Psoas muscle (tissue), 8 donors: ENCODE measurements at regions of chr19 and their contacts with region 1.

Region 1: GRCh38 chr19:49200238-49200862 is 42.8 kb downstream of the TRPM4 start:
- DNase-seq: peak in 1 of 2 donors; percentile 55
- ATAC-seq: peak in 3 of 4 donors; percentile 36 to 41 (median 41)
- H3K4me3 ChIP-seq: no peak overlapping the region
- H3K27ac ChIP-seq: no peak overlapping the region
- H3K4me1 ChIP-seq: peaks cover 13% of the 10 kb centered on the region
- H3K27me3 ChIP-seq: no peaks in the 10 kb centered on the region
- CTCF ChIP-seq: no peak

Region 2: DNA sequence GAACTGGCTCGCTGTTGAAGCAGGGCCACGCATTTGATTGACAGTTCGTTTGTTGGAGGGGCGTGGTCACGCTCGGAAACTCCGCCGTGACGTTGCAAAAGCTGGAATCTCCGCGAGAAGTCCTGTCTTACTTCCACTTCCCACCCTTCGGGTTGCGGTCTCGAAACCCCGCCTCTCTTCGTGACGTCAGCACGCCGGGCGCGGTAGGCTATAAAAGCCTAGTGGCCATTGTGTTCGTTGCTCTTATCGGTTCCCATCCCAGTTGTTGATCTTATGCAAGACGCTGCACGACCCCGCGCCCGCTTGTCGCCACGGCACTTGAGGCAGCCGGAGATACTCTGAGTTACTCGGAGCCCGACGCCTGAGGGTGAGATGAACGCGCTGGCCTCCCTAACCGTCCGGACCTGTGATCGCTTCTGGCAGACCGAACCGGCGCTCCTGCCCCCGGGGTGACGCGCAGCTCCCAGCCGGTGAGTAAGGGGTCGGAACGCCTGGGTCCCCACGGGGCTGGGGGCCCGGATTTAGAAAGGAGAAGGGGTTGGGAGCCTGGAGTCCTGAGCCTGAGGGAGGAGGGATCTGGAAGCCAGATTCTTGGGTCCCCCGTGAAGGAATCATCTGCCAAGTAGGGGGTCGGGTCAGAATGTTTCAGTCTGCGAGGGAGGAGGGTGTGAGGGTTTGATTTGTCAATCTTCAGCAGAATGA is 328.0 kb before region 1 on chr19 and contains the start of gene PPP1R15A:
- intact Hi-C with region 1: no loop called
- DNase-seq: peak; percentile 97 to 99
- ATAC-seq: peak; percentile 69 to 77 (median 74)
- H3K4me3 ChIP-seq: peak within 1 kb of the TSS; percentile 99
- H3K27ac ChIP-seq: peak within 1 kb of the TSS; percentile 100
- H3K4me1 ChIP-seq: peaks cover 38% of the 10 kb centered on the region
- H3K27me3 ChIP-seq: no peaks in the 10 kb centered on the region
- CTCF ChIP-seq: peak; percentile 20
- total RNA-seq, gene PPP1R15A: 34.5 to 93.4 (median 41.3) TPM

Region 3: DNA sequence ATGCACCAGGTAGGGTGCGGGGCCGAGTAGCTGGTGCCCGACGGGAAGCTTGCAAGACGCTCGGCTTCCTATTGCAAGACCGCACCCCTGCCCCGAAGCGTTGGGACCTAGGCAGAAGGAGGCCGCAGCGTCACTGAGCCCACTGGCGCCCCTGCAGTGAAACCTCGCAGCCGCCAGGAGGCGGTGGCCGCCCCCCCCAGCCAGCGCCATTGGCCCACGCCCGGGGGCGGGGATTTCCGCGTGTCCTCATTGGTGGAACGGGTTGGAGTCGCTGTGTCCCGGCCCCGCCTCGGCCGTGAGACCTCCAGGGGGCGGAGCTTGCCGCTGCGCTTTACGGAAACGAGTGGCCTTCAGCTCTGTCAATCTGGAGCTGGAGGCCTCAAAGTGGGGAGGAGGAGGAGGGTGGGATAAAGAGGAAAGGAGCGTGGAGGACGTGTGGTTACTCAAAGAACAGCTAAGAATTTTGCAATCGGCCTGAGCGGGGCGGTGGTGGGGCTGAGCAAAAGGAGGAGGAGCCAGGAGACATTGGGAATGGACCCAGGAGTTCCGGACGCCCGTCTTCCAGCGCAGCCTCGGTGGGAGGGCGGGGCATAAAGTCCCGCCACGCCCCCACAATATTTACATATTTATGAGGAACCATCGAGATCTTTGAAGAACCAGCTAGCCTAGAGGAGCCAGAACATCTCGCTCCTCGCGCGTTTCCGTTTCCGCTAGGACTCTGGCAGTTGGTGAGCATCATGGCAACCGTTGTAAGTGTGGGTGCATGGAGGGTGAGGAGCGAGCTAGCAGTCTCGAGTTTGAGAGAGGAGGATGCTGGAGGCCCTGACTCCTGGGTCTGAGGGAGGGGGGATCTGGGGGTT is 206.9 kb before region 1 on chr19 and contains the starts of genes GYS1 and RUVBL2:
- intact Hi-C with region 1: loop called (anchors 10 kb)
- DNase-seq: peak; percentile 100
- ATAC-seq: peak; percentile 83 to 87 (median 84)
- H3K4me3 ChIP-seq: peak within 1 kb of the TSS; percentile 81
- H3K27ac ChIP-seq: peak within 1 kb of the TSS; percentile 90
- H3K4me1 ChIP-seq: peaks cover 48% of the 10 kb centered on the region
- H3K27me3 ChIP-seq: no peaks in the 10 kb centered on the region
- CTCF ChIP-seq: peak; percentile 97
- total RNA-seq, gene GYS1: 147 to 331 (median 238) TPM
- total RNA-seq, gene RUVBL2: 61.1 to 87.4 (median 81.8) TPM

Region 4: GRCh38 chr19:49097455-49098288 is 102.7 kb before region 1 on chr19:
- intact Hi-C with region 1: loop called (anchors 5 kb)
- DNase-seq: peak; percentile 67 to 84
- ATAC-seq: peak; percentile 69 to 83 (median 80)
- H3K4me3 ChIP-seq: no peak overlapping the region
- H3K27ac ChIP-seq: peak overlapping the region; percentile 69
- H3K4me1 ChIP-seq: peaks cover 55% of the 10 kb centered on the region
- H3K27me3 ChIP-seq: no peaks in the 10 kb centered on the region
- CTCF ChIP-seq: peak; percentile 100

Region 5: GRCh38 chr19:49157445-49158224 is 42.7 kb before region 1 on chr19 and contains the start of gene TRPM4:
- intact Hi-C with region 1: loop called (anchors 5 kb)
- DNase-seq: peak; percentile 92 to 96
- ATAC-seq: peak; percentile 57 to 73 (median 70)
- H3K4me3 ChIP-seq: peak within 1 kb of the TSS; percentile 93
- H3K27ac ChIP-seq: peak within 1 kb of the TSS; percentile 90
- H3K4me1 ChIP-seq: peaks cover 22% of the 10 kb centered on the region
- H3K27me3 ChIP-seq: no peaks in the 10 kb centered on the region
- CTCF ChIP-seq: no peak
- total RNA-seq, gene TRPM4: 9.5 to 20.6 (median 16.2) TPM

Region 6: DNA sequence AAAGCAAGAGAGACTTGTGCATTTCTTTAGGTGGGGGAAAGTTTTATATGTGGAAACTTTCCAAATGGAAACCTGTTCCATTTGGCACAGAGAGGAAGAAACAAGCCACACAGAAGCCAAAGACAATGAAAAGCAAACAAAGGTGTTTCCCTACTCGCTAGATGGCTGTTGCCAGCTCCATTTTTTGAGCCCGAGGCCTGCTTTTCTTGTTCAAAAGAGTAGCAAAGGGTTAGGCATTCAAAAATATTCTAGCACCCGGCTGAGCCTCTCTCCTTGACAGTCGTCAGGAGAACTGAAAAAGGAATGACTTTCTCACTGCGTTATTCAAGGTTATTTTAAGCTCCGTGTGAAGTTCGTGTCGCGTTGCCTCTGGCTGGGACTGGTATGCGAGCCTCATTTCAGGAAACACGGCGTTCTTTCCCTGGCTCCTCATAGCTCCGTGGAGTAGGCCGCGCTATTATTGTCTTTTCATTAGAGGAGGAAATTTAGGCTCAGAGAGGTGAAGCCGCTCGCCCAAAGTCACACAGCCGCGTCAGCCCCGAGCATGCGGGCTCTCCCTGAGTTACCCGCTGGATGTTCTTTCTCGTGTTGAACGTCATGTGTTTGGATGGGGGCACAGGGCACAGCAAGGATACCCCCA is 35.1 kb before region 1 on chr19:
- intact Hi-C with region 1: loop called in 1 of 2 experiments (anchors 5 kb)
- DNase-seq: peak in 1 of 2 donors; percentile 82
- ATAC-seq: peak; percentile 90 to 95 (median 94)
- H3K4me3 ChIP-seq: peak overlapping the region; percentile 53
- H3K27ac ChIP-seq: peak overlapping the region; percentile 91
- H3K4me1 ChIP-seq: peaks cover 31% of the 10 kb centered on the region
- H3K27me3 ChIP-seq: no peaks in the 10 kb centered on the region
- CTCF ChIP-seq: no peak

Region 7: DNA sequence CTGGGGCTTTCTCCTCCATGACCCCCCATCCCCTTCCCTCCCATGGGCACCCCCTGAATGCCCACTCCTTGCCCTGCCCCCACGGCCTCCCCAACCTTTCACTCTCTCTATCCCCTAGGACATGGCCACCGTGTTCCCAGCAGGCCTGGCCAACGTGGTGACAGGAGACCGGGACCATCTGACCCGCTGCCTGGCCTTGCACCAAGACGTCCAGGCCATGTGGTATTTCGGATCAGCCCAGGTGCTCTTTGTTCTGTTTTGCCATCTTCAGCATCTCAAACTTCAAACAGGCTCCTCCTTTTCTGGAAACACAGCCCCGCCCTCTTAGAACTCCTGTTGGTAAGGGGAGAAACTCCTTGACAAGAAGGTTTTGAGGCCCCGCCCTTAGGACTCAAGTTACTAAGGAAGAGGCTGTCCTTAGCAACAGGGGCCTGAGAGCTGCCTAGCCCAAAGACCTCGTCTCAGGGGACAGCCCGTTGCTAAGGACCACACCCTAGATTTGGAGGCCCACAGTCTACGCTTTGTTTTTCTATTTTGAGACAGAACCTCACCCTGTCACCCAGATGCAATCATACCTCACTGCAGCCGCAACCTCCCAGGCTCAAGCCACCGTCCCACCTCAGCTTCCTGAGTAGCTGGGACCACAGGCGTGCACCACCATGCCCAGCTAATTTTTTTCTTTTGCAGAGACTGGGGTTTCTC is 268.5 kb after region 1 on chr19:
- intact Hi-C with region 1: no loop called
- DNase-seq: peak; percentile 76 to 91
- ATAC-seq: peak; percentile 31 to 66 (median 47)
- H3K4me3 ChIP-seq: no peak overlapping the region
- H3K27ac ChIP-seq: peak overlapping the region; percentile 41
- H3K4me1 ChIP-seq: peaks cover 5% of the 10 kb centered on the region
- H3K27me3 ChIP-seq: no peaks in the 10 kb centered on the region
- CTCF ChIP-seq: no peak